ENCODE measurements at regions of chr16 and their contacts with region 1.

Region 1: DNA sequence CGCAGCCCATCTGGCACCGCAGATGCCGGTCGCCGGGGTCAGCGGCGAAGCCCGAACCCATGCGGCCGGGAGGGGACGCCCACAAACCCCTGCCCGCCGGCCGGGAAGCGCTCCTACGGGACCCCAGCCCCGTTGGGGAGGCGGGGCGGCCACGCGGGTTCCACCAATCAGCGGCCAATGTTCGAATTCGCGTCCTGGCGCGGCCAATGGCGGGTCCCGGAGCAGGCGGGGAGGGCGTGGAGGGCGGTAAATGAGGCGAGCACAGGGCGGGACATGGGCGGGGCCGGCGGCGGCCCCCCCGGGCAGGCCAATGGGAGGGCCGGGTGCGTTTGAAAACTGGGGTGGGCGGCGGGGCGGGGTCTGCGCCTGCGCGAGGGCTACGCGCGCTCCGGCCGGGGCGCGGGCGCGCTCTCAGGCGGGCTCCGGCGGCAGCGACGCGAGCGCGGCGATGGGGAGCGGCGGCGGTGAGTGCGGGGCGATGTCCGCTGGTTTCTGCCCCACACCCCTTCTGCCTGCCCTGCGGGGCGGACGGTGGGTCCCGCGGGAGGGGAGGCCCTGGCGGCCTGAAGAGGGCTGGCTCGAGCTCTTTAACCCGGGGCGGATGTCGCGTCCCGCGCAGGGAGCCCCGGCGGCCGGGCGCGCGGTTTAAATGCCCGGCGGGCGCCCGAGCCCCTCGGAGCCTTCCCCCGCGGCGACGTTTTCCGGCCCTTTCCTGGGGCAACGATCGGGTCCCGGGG is at the start of gene CCNF:
- DNase-seq: peak; percentile 87 to 98 (median 92)
- ATAC-seq: peak; percentile 99
- H3K4me3 ChIP-seq: peak within 1 kb of the TSS; percentile 83
- H3K4me3 Mint-ChIP-seq: peak within 1 kb of the TSS; percentile 81 to 97 (median 88)
- H3K27ac ChIP-seq: peak within 1 kb of the TSS; percentile 68
- H3K27ac Mint-ChIP-seq: peak within 1 kb of the TSS; percentile 11 to 88 (median 71)
- H3K4me1 ChIP-seq: peaks cover 5 to 10% of the 10 kb centered on the region in 2 donors
- H3K4me1 Mint-ChIP-seq: peaks cover 12 to 38% (median 19%) of the 10 kb centered on the region in 7 donors
- H3K27me3 ChIP-seq: no peaks in the 10 kb centered on the region
- H3K27me3 Mint-ChIP-seq: no peaks in the 10 kb centered on the region
- total RNA-seq, gene CCNF: 2.6 to 50.1 (median 3.4) TPM

Region 2: DNA sequence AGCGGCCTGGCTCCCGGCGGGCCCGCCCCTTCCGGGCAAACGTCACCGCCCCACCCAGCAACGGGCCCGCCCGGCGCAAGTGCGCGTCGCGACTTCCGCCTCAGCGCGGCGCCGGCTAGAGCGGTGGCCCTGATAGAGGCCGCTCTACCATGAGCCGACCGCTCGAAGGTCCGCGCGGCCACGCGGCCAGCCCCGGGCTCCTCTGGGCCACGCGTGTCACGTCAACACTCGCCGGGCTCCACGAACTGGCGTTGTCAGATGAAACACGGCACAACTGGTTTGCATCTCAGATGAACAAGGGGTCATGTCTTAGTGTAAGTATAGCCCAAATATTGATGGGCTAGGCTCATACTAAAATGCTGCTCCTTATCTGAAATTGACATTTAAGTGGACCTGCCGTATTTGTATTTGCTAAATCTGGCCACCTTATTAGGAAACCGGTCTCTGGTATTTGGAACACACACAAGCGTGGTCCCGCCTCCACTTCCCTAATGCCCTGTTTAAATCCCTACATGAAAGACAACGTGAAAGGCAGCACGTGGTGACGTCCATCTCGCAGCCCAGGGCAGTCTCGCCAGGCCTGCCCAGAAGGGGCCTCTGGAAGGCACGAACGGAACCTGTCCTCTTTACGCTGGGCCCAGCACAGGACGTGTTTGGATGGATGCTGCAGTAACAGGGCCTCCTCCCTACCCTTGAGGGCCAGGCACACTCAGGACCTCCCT is 419.3 kb before region 1 on chr16 and contains the start of gene ZNF598:
- CTCF ChIA-PET with region 1: no interaction called
- POLR2A ChIA-PET with region 1: no interaction called
- intact Hi-C with region 1: loop called in 1 of 2 experiments (anchors 1 kb)
- DNase-seq: peak; percentile 64 to 87 (median 78)
- ATAC-seq: peak; percentile 97
- H3K4me3 ChIP-seq: peak within 1 kb of the TSS; percentile 77
- H3K4me3 Mint-ChIP-seq: peak within 1 kb of the TSS; percentile 87 to 94 (median 92)
- H3K27ac ChIP-seq: peak within 1 kb of the TSS; percentile 91
- H3K27ac Mint-ChIP-seq: peak within 1 kb of the TSS; percentile 85 to 99 (median 97)
- H3K4me1 ChIP-seq: peaks cover 26 to 29% of the 10 kb centered on the region in 2 donors
- H3K4me1 Mint-ChIP-seq: peaks cover 22 to 39% (median 32%) of the 10 kb centered on the region in 7 donors
- H3K27me3 ChIP-seq: no peaks in the 10 kb centered on the region
- H3K27me3 Mint-ChIP-seq: no peaks in the 10 kb centered on the region
- total RNA-seq, gene ZNF598: 44.3 to 63.2 (median 49.8) TPM

Region 3: DNA sequence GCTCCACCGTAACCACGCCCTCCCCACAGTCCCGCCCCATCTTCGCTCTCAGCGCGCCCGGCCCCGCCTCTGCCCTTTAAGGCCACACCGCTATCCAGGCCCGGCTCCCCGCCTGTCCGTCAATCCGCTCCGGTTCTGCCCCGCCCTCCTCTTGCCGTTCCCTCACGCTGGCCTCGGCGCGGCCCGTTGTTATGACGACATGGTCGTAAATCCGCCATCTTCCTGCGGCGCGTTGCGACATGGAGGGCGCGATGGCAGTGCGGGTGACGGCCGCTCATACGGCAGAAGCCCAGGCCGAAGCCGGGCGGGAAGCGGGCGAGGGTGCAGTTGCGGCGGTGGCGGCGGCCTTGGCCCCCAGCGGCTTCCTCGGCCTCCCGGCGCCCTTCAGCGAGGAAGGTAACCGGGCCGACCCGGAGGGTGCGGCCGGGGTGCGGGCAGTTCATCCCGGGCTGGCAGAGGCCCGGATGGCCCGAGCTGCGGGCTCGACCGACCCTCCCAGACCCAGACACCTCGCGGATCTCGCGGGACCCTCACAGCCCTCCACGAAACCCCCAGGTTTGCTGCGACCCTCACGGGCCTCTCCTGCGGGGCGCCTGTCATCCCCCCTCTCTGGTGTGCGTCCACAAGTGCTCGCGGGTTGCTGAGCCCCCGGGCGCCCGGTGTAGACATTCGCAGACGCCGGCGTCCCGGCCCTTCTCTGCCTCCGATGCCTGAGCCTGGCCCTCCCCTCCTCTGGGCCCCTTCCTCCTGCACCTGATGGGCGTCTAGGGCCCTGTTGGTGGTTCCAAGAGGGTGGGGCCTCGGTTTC is 205.6 kb before region 1 on chr16 and contains the start of gene E4F1:
- CTCF ChIA-PET with region 1: no interaction called
- POLR2A ChIA-PET with region 1: no interaction called
- intact Hi-C with region 1: loop called (anchors 1 to 2 kb)
- DNase-seq: peak; percentile 91 to 99 (median 97)
- ATAC-seq: peak; percentile 99
- H3K4me3 ChIP-seq: peak within 1 kb of the TSS; percentile 81
- H3K4me3 Mint-ChIP-seq: peak within 1 kb of the TSS; percentile 79 to 91 (median 88)
- H3K27ac ChIP-seq: peak within 1 kb of the TSS; percentile 81
- H3K27ac Mint-ChIP-seq: peak within 1 kb of the TSS; percentile 45 to 92 (median 86)
- H3K4me1 ChIP-seq: peaks cover 7 to 9% of the 10 kb centered on the region in 2 donors
- H3K4me1 Mint-ChIP-seq: peaks cover 0 to 25% (median 19%) of the 10 kb centered on the region in 7 donors
- H3K27me3 ChIP-seq: no peaks in the 10 kb centered on the region
- H3K27me3 Mint-ChIP-seq: peaks cover 0 to 3% (median 0%) of the 10 kb centered on the region in 5 donors
- total RNA-seq, gene E4F1: 31.3 to 45.6 (median 36.8) TPM

Region 4: GRCh38 chr16:2383501-2383900 is 45.7 kb before region 1 on chr16:
- CTCF ChIA-PET with region 1: no interaction called
- POLR2A ChIA-PET with region 1: no interaction called
- intact Hi-C with region 1: no loop called
- DNase-seq: no peak
- ATAC-seq: no peak
- H3K4me3 ChIP-seq: no peak overlapping the region
- H3K4me3 Mint-ChIP-seq: no peak overlapping the region
- H3K27ac ChIP-seq: no peak overlapping the region
- H3K27ac Mint-ChIP-seq: no peak overlapping the region
- H3K4me1 ChIP-seq: no peaks in the 10 kb centered on the region
- H3K4me1 Mint-ChIP-seq: peaks cover 0 to 6% (median 0%) of the 10 kb centered on the region in 7 donors
- H3K27me3 ChIP-seq: no peaks in the 10 kb centered on the region
- H3K27me3 Mint-ChIP-seq: peaks cover 0 to 21% (median 10%) of the 10 kb centered on the region in 5 donors

Region 5: GRCh38 chr16:2443555-2443954 is 14.4 kb after region 1 on chr16:
- CTCF ChIA-PET with region 1: interaction called, 6 read pairs
- POLR2A ChIA-PET with region 1: interaction called, 4 read pairs
- intact Hi-C with region 1: loop called in 1 of 2 experiments (anchors 1 kb)
- DNase-seq: no peak
- ATAC-seq: no peak
- H3K4me3 ChIP-seq: no peak overlapping the region
- H3K4me3 Mint-ChIP-seq: no peak overlapping the region
- H3K27ac ChIP-seq: no peak overlapping the region
- H3K27ac Mint-ChIP-seq: no peak overlapping the region
- H3K4me1 ChIP-seq: no peaks in the 10 kb centered on the region
- H3K4me1 Mint-ChIP-seq: peaks cover 0 to 11% (median 6%) of the 10 kb centered on the region in 7 donors
- H3K27me3 ChIP-seq: no peaks in the 10 kb centered on the region
- H3K27me3 Mint-ChIP-seq: no peaks in the 10 kb centered on the region

Region 6: DNA sequence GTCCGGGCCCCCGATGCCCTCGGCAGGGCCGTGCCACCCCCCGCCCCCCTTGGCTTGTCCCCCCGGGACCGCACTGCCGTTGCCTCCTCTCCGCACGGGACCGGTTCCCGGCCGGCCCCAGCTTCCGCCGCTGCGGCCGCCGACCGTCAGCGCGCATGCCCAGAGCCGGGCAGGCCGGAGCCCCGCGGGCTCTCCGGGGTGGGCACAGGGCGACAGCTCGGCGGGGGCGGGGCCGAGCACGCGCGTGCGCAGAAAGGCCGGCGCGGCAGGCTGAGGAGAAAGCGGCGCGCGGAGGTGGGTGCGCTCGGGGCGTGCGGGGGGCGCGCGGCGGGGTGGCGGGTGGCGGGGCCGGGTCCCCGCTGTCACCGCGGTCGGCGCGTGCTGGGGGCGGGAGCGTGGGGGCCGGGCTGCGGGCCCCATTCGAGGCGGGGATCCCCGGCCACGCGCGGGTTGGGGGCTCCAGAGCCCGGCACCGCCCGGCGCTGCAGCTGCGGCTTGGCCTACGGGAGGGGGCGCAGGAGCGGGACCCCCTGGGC is 45.7 kb after region 1 on chr16 and contains the start of gene TBC1D24:
- CTCF ChIA-PET with region 1: no interaction called
- POLR2A ChIA-PET with region 1: no interaction called
- intact Hi-C with region 1: loop called (anchors 1 kb)
- DNase-seq: peak; percentile 41 to 94 (median 65)
- ATAC-seq: peak; percentile 80
- H3K4me3 ChIP-seq: peak within 1 kb of the TSS; percentile 71
- H3K4me3 Mint-ChIP-seq: peak within 1 kb of the TSS; percentile 61 to 81 (median 73)
- H3K27ac ChIP-seq: peak within 1 kb of the TSS; percentile 66
- H3K27ac Mint-ChIP-seq: no peak within 1 kb of the TSS
- H3K4me1 ChIP-seq: peaks cover 11 to 12% of the 10 kb centered on the region in 2 donors
- H3K4me1 Mint-ChIP-seq: peaks cover 14 to 34% (median 17%) of the 10 kb centered on the region in 7 donors
- H3K27me3 ChIP-seq: peaks cover 4 to 14% of the 10 kb centered on the region in 2 donors
- H3K27me3 Mint-ChIP-seq: peaks cover 7 to 31% (median 13%) of the 10 kb centered on the region in 5 donors
- total RNA-seq, gene TBC1D24: 5.4 to 13.5 (median 9.2) TPM

Region 7: DNA sequence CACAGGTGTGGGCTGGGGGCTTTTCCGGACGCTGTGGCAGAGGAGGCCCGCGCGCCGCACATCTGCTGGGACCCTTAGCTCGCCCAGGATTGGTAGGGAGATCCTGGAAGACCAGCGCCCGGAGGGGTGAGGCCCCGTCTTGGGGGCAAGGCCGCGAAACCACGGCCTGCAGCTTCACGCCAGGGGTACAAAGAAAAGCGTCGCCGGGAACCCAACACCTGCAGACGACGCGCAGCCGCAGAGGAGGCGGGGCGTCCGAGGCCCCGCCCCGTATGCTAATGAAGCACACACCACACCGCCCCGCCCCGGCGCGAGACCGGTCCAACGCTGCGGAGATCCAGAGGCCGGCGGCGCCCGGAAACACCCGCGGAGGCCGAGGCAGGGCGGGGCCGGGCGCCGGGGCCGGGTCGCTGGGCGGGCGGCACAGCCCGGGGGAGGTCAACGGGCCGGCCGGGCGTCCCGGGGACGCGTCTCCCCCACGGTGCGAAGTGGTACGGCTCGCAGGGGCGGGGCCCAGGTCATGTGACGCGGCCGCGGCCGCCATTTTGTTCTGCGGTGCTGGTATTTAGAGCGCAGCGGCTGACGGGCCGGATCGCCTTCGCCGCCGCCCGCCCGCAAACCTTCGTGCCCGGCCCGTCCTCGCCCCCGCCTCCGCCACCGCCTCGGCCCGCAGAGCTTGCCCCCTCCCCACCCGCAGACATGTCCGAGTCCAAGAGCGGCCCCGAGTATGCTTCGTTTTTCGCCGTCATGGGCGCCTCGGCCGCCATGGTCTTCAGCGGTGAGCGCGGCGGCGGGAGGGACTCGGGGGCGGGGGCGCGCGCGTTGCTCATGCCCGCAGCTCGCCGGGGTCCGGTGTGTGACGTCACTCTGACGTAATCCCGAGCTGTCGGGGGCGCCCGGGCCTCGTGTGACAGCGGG is 84.5 kb after region 1 on chr16 and contains the start of gene ATP6V0C:
- CTCF ChIA-PET with region 1: no interaction called
- POLR2A ChIA-PET with region 1: no interaction called
- intact Hi-C with region 1: loop called in 1 of 2 experiments (anchors 1 kb)
- DNase-seq: peak; percentile 89 to 98 (median 94)
- ATAC-seq: peak; percentile 87
- H3K4me3 ChIP-seq: peak within 1 kb of the TSS; percentile 71
- H3K4me3 Mint-ChIP-seq: peak within 1 kb of the TSS; percentile 85 to 94 (median 91)
- H3K27ac ChIP-seq: peak within 1 kb of the TSS; percentile 100
- H3K27ac Mint-ChIP-seq: peak within 1 kb of the TSS; percentile 90 to 98 (median 96)
- H3K4me1 ChIP-seq: peaks cover 31 to 44% of the 10 kb centered on the region in 2 donors
- H3K4me1 Mint-ChIP-seq: peaks cover 36 to 60% (median 48%) of the 10 kb centered on the region in 7 donors
- H3K27me3 ChIP-seq: no peaks in the 10 kb centered on the region
- H3K27me3 Mint-ChIP-seq: peaks cover 0 to 3% (median 0%) of the 10 kb centered on the region in 5 donors
- total RNA-seq, gene ATP6V0C: 98.2 to 303 (median 113) TPM

Region 8: DNA sequence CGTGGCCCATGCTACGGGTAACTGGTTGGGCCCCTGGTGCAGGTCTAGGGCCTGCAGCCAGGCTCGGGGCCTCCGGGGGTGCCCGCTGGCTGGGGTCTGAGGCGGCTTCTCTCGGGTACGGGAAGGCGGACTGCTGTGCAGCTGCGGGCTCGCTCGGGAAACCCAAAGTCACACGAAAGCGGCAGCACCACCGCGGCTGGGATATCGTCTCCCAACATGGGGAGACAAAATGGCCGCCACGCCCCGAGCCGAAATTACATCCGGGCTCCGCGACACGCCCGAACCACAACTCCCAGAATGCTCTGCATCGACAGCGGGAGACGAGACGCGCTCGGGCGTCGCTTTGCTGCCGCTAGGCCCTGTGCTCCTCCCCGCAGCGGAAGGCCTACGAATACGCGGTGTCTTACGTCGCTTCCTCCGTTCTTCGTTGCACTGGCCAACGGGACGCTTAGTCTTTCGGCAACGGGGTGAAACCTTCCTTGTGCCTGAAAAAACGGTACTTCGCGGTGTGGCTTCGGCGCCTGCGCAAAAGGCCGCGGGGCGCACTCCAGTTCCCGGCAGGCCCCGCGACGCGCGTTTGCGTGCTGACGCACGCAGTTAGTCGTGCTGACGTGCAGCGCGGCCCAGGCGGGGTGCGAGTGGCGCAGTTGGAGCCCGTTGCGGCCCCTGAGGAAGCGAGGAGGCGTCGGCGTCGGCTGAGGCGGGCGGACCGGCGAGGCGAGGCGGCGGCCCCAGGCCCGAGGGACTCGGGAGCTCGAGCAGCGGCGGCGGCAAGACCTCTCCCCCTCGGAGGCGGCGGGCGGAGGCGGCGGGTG is 323.0 kb after region 1 on chr16 and contains the start of gene SRRM2:
- CTCF ChIA-PET with region 1: no interaction called
- POLR2A ChIA-PET with region 1: no interaction called
- intact Hi-C with region 1: loop called in 1 of 2 experiments (anchors 1 kb)
- DNase-seq: peak; percentile 92 to 98 (median 96)
- ATAC-seq: peak; percentile 92
- H3K4me3 ChIP-seq: peak within 1 kb of the TSS; percentile 68
- H3K4me3 Mint-ChIP-seq: peak within 1 kb of the TSS; percentile 89 to 98 (median 94)
- H3K27ac ChIP-seq: peak within 1 kb of the TSS; percentile 100
- H3K27ac Mint-ChIP-seq: peak within 1 kb of the TSS; percentile 96 to 100 (median 99)
- H3K4me1 ChIP-seq: peaks cover 35 to 40% of the 10 kb centered on the region in 2 donors
- H3K4me1 Mint-ChIP-seq: peaks cover 37 to 57% (median 50%) of the 10 kb centered on the region in 7 donors
- H3K27me3 ChIP-seq: no peaks in the 10 kb centered on the region
- H3K27me3 Mint-ChIP-seq: no peaks in the 10 kb centered on the region
- total RNA-seq, gene SRRM2: 590 to 1,259 (median 1,020) TPM

Measured in naive thymus-derived CD4-positive, alpha-beta T cell (primary cell).